SK-N-SH (cell line): ENCODE measurements at regions of chr12 and their contacts with region 1.

Region 1: DNA sequence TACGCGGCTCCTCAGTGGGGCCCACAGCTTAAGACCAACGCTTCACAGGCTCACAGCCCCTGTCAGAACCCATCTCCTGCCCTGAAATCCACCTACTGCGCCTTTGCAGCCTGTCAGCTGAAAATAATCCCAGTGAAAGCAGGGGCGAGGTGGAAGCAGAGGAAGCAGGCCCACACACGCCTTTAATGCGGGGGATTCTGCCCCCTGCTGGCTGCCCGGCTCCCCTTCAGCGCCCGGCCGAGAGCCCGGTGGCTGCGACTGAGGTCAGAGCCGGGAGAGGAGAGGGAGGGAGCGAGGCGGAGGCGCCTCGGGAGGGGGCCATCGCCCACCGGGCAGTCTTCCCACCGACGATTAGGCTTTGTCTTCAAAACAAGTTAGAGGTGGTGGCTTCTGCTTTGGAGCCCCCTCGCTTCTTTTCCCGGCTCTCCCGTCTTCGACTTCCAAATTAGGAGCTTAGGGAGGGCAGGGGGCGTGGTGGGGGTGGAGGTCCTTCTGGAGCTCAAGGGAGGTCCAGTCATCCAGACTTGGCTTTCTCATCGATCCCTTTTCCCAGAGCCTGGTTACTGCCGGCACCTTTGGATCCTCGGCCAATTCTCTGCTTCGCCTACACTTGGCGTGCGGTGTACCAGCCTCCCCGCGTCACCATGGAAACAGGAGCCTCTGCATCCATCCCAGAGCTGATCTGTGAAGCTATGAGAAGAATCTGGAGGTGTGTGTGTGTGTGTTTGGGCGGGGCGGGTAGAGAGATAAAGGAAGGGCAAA is 25.2 kb upstream of the RND1 start:
- DNase-seq: peak; percentile 86
- H3K4me3 ChIP-seq: peak overlapping the region; percentile 39 to 63
- H3K27ac ChIP-seq: no peak overlapping the region
- H3K4me1 ChIP-seq: peaks cover 0 to 2% of the 10 kb centered on the region in 2 experiments; a peak in 1 of 4 replicates
- H3K27me3 ChIP-seq: no peaks in the 10 kb centered on the region; the same call in 1 of the 2 replicates
- CTCF ChIP-seq: peak; percentile 92
- EP300 ChIP-seq: no peak
- RAD21 ChIP-seq: peak; percentile 84

Region 2: DNA sequence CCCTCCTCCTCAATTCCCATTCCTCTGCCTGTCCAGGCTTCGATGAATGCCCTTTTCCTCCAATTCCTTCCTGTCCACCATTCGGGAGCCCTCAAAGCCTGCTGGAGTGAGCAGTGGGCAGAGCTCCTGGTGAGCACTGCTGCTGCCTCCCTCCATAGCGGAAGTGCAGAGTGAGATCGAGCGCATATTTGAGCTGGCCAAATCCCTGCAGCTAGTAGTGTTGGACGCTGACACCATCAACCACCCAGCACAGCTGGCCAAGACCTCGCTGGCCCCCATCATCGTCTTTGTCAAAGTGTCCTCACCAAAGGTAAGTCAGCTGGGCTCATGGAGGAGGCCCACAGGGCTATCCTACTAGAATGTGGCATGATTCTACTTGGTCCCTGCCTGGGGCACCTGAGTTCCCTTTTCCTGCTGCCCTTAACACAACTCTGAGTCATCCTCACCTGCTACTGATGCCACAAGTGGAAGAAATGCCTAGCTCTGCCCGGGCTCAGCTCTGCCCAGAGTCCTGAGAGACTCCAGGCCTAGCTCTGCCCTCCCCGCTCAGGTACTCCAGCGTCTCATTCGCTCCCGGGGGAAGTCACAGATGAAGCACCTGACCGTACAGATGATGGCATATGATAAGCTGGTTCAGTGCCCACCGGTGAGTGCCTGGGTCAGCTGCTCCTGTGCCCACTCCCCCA is 64.5 kb before region 1 on chr12:
- CTCF ChIA-PET with region 1: interaction called, 16 read pairs
- POLR2A ChIA-PET with region 1: no interaction called
- DNase-seq: no peak
- H3K4me3 ChIP-seq: no peak overlapping the region
- H3K27ac ChIP-seq: no peak overlapping the region
- H3K4me1 ChIP-seq: no peaks in the 10 kb centered on the region; a peak in 1 of 4 replicates
- H3K27me3 ChIP-seq: no peaks in the 10 kb centered on the region
- CTCF ChIP-seq: no peak
- EP300 ChIP-seq: no peak
- RAD21 ChIP-seq: no peak

Region 3: GRCh38 chr12:48865434-48866290 is 25.2 kb before region 1 on chr12 and contains the start of gene RND1:
- CTCF ChIA-PET with region 1: interaction called, 667 read pairs
- POLR2A ChIA-PET with region 1: interaction called, 19 read pairs
- DNase-seq: peak; percentile 94
- H3K4me3 ChIP-seq: peak within 1 kb of the TSS; percentile 62 to 92
- H3K27ac ChIP-seq: no peak within 1 kb of the TSS; a peak in 1 of 4 replicates
- H3K4me1 ChIP-seq: peaks cover 0 to 9% of the 10 kb centered on the region in 2 experiments; a peak in 1 of 4 replicates
- H3K27me3 ChIP-seq: peaks cover 16% of the 10 kb centered on the region
- CTCF ChIP-seq: 0 out of 2 replicates have a peak, but pooled peaks have one; percentile 18
- EP300 ChIP-seq: no peak
- RAD21 ChIP-seq: no peak
- polyA plus RNA-seq, gene RND1: 0.19 and 0.39 TPM in 2 replicates

Region 4: GRCh38 chr12:48924617-48925303 is 33.9 kb after region 1 on chr12:
- CTCF ChIA-PET with region 1: interaction called, 18 read pairs
- POLR2A ChIA-PET with region 1: no interaction called
- DNase-seq: peak; percentile 77
- H3K4me3 ChIP-seq: peak overlapping the region; percentile 52 to 57; a peak in 3 of 4 replicates
- H3K27ac ChIP-seq: no peak overlapping the region
- H3K4me1 ChIP-seq: no peaks in the 10 kb centered on the region; a peak in 1 of 4 replicates
- H3K27me3 ChIP-seq: no peaks in the 10 kb centered on the region
- CTCF ChIP-seq: peak; percentile 36
- EP300 ChIP-seq: no peak
- RAD21 ChIP-seq: peak; percentile 44

Region 5: GRCh38 chr12:48988030-48988649 is 97.3 kb after region 1 on chr12:
- CTCF ChIA-PET with region 1: interaction called, 17 read pairs
- POLR2A ChIA-PET with region 1: no interaction called
- DNase-seq: peak; percentile 87
- H3K4me3 ChIP-seq: no peak overlapping the region; a peak in 1 of 4 replicates
- H3K27ac ChIP-seq: no peak overlapping the region
- H3K4me1 ChIP-seq: no peaks in the 10 kb centered on the region
- H3K27me3 ChIP-seq: peaks cover 32% of the 10 kb centered on the region
- CTCF ChIP-seq: peak; percentile 88
- EP300 ChIP-seq: no peak
- RAD21 ChIP-seq: peak; percentile 49

Region 6: DNA sequence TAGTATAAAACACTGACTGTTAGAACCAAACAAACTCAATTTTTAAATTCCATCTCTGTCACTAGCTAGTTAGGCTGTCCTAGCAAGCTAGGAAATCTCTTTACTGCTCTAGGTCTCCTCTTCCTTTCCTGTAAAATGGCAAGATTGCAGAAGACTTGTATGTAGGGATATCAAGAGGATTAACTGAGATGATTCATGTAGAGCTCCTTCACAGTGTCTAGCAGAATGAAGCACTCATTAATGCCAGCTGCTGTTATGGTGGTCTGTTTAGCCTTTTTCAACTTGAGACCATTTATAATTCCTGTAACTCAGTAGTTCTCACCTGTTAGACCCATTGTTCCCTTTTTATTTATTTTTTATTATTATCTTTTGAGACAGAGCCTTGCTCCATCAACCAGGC is 580.1 kb after region 1 on chr12:
- CTCF ChIA-PET with region 1: no interaction called
- POLR2A ChIA-PET with region 1: no interaction called
- DNase-seq: no peak
- H3K4me3 ChIP-seq: no peak overlapping the region
- H3K27ac ChIP-seq: peak overlapping the region in 1 of 2 experiments; percentile 20; a peak in 1 of 4 replicates
- H3K4me1 ChIP-seq: no peaks in the 10 kb centered on the region; a peak in 1 of 4 replicates
- H3K27me3 ChIP-seq: no peaks in the 10 kb centered on the region
- CTCF ChIP-seq: no peak
- EP300 ChIP-seq: no peak
- RAD21 ChIP-seq: no peak